ENCODE measurements at regions of chr12 and their contacts with region 1.

Region 1: DNA sequence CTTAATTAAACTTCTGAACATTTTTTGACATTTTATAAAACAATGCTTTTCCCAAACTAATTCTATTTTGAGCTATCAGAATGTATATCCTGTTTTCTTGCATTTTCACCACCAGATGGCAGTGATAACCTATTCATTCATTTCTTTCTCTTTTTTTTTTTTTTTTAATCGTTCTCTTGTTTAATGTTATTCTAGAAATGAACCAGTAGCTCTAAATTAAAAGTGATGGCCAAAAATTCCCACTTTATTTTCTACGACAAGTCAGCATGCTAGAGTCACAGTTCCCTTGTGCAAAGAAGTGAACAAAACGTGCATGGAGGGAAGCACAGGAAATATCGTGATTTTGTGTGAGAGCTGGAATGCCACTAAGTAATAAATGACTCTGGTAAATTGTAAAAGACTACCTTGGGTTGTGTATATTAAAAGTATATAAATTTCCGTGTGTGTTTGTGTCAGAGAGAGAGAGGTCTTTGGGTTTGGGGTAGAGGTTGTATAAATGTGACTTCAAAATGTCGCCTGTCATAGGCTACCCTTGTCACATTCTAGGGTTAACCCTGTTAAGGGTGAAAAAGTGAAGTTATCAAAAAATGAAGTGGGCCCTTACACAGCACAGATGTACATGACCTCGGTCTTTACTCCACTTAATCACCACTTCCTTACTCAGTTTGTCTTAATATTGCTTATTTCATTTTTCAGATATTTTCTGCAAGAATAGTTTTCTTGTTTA is 40.4 kb upstream of the LDHB start:
- DNase-seq: no peak
- ATAC-seq: no peak
- H3K4me3 ChIP-seq: peak overlapping the region in 2 of 4 donors; percentile 17 to 20
- H3K27ac ChIP-seq: peak overlapping the region in 1 of 4 donors; percentile 21
- H3K4me1 ChIP-seq: no peaks in the 10 kb centered on the region
- H3K27me3 ChIP-seq: no peaks in the 10 kb centered on the region
- CTCF ChIP-seq: peak; percentile 44 to 69 (median 56)
- POLR2A ChIP-seq: no peak

Region 2: DNA sequence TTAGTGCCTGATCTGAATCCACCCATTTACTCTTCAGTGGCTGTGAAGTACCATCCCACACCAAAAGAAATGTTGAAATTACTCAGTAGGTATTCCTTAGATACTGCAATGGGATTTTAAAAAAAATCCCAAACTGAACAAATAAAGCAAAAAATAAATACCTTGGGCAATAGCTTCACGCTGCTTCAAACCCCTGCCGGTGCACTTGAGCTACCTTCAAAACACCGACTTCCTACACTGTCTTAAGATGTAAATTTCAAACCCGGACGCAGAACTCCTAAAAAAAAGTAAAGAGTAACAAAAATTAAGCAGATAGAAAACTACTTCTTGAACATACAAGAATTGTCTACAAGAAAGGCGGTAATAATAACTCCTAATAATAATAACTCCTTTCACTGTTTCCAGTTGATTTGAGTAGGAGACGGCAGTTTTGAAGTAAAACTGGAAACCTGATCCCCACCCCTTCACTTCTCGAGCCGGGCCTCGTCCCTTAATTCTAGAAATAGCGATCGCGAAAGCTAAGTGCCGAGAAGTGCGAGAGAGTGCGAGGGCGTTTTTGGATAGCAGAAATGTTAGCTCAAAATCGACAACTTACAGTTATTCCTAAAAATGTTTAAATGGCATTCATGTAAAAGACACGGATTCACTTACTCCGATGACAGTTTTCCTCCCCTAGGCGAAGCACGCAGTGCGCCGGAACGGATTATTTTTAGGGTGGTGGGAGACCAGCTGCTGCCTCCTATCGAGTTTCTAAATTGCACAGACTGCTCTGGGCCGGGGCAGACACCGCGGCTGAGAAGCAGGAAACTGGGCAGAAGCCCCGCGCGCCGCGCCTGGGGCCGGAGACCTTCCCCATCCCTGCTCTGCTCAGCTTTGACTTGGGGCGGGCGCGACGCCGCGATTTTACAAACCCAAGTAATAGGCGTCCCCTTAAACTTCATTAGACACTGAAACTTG is 242.8 kb after region 1 on chr12 and contains the start of gene ABCC9:
- in situ Hi-C with region 1: no loop called
- intact Hi-C with region 1: loop called (anchors 5 kb)
- DNase-seq: peak; percentile 73 to 85
- ATAC-seq: peak; percentile 87 to 91
- H3K4me3 ChIP-seq: peak within 1 kb of the TSS; percentile 61 to 78 (median 70)
- H3K27ac ChIP-seq: peak within 1 kb of the TSS; percentile 91 to 97 (median 93)
- H3K4me1 ChIP-seq: peaks cover 25 to 34% of the 10 kb centered on the region in 2 donors
- H3K27me3 ChIP-seq: no peaks in the 10 kb centered on the region
- CTCF ChIP-seq: peak in 1 of 5 experiments; percentile 7
- POLR2A ChIP-seq: peak; percentile 90 to 94
- total RNA-seq, gene ABCC9: 76.1 to 140 (median 118) TPM

Region 3: GRCh38 chr12:21989819-21990412 is 291.8 kb after region 1 on chr12:
- in situ Hi-C with region 1: loop called in 2 of 4 experiments (anchors 10 kb)
- intact Hi-C with region 1: loop called (anchors 1 kb)
- DNase-seq: no peak
- ATAC-seq: no peak
- H3K4me3 ChIP-seq: no peak overlapping the region
- H3K27ac ChIP-seq: no peak overlapping the region
- H3K4me1 ChIP-seq: no peaks in the 10 kb centered on the region
- H3K27me3 ChIP-seq: no peaks in the 10 kb centered on the region
- CTCF ChIP-seq: peak; percentile 19 to 57 (median 52)
- POLR2A ChIP-seq: no peak

Region 4: GRCh38 chr12:22018860-22019259 is 320.8 kb after region 1 on chr12:
- in situ Hi-C with region 1: loop called in 3 of 4 experiments (anchors 5 to 10 kb)
- intact Hi-C with region 1: loop called (anchors 2 kb)
- DNase-seq: no peak
- ATAC-seq: no peak
- H3K4me3 ChIP-seq: no peak overlapping the region
- H3K27ac ChIP-seq: no peak overlapping the region
- H3K4me1 ChIP-seq: no peaks in the 10 kb centered on the region
- H3K27me3 ChIP-seq: no peaks in the 10 kb centered on the region
- CTCF ChIP-seq: peak; percentile 25 to 64 (median 45)
- POLR2A ChIP-seq: no peak

Region 5: DNA sequence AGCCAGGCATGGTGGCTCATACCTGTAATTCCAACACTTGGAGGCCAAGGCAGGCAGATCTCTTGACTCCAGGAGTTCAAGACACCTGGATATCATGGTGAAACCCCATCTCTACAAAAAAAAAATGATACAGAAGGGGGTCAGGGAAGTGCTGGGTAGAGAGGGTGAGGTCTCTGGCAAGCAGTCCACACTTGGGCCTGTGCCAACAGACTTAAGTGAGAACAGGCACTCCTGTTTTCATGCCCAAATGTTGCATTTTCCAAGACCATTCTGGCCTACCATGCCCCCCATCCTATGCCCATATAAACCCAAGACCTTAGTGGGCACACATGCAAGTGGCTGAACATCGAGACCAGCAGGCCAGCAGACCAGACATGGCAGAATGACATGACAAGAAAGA is 331.9 kb after region 1 on chr12:
- in situ Hi-C with region 1: loop called in 1 of 4 experiments (anchors 10 kb)
- intact Hi-C with region 1: no loop called
- DNase-seq: no peak
- ATAC-seq: no peak
- H3K4me3 ChIP-seq: no peak overlapping the region
- H3K27ac ChIP-seq: no peak overlapping the region
- H3K4me1 ChIP-seq: no peaks in the 10 kb centered on the region
- H3K27me3 ChIP-seq: no peaks in the 10 kb centered on the region
- CTCF ChIP-seq: no peak
- POLR2A ChIP-seq: no peak

Region 6: GRCh38 chr12:22443379-22444316 is 745.6 kb after region 1 on chr12:
- in situ Hi-C with region 1: no loop called
- intact Hi-C with region 1: loop called (anchors 10 kb)
- DNase-seq: peak; percentile 29 to 38
- ATAC-seq: peak; percentile 83 to 93
- H3K4me3 ChIP-seq: no peak overlapping the region
- H3K27ac ChIP-seq: no peak overlapping the region
- H3K4me1 ChIP-seq: no peaks in the 10 kb centered on the region
- H3K27me3 ChIP-seq: no peaks in the 10 kb centered on the region
- CTCF ChIP-seq: peak; percentile 17 to 68 (median 63)
- POLR2A ChIP-seq: no peak

Region 7: DNA sequence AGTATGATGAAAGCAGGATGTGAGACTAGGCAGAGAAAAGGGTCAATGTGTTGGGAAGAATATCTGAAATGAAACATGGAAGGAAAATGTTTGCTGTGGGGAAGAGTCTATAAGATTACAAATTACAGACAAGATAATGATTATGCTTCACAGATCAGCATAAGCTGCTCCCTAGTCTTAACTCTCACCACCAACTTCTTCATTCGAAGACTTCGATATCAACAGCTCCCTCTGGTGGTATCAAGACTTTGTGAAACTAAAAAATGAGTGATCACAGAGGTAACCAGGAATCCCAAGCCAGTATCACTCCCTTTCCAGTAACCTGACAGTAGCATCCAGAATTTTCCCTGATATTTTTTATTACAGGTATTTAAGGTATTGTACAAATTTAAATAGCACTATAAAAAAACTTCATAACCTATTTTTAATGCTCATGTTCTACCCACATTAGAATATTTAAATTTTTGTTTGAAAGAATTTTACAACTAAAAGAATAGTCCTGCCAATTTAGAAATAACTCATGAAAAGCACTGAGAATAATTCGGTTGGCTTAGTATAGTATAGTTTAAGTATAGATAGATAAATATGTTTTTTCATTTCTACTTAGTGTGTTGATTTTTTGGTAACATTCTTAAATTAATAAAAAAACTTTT is 761.9 kb after region 1 on chr12:
- in situ Hi-C with region 1: loop called in 1 of 4 experiments (anchors 10 kb)
- intact Hi-C with region 1: no loop called
- DNase-seq: no peak
- ATAC-seq: peak in 1 of 2 donors; percentile 33
- H3K4me3 ChIP-seq: no peak overlapping the region
- H3K27ac ChIP-seq: no peak overlapping the region
- H3K4me1 ChIP-seq: no peaks in the 10 kb centered on the region
- H3K27me3 ChIP-seq: no peaks in the 10 kb centered on the region
- CTCF ChIP-seq: peak in 4 of 5 experiments; percentile 26 to 48 (median 30)
- POLR2A ChIP-seq: no peak

Measured in gastrocnemius medialis (tissue), 4 donors.